ENCODE measurements at regions of chr7 and their contacts with region 1.

Region 1: GRCh38 chr7:27210441-27211083 is 10.7 kb upstream of the HOXA13 start:
- DNase-seq: peak; percentile 85
- H3K4me3 ChIP-seq: peak overlapping the region; percentile 31 to 50
- H3K27ac ChIP-seq: no peak overlapping the region
- H3K4me1 ChIP-seq: peaks cover 0 to 16% of the 10 kb centered on the region in 2 experiments; a peak in 1 of 4 replicates
- H3K27me3 ChIP-seq: peaks cover 97% of the 10 kb centered on the region
- CTCF ChIP-seq: peak; percentile 90
- EP300 ChIP-seq: no peak
- RAD21 ChIP-seq: peak; percentile 72

Region 2: GRCh38 chr7:27031289-27032172 is 179.0 kb before region 1 on chr7:
- CTCF ChIA-PET with region 1: no interaction called
- POLR2A ChIA-PET with region 1: no interaction called
- DNase-seq: no peak
- H3K4me3 ChIP-seq: no peak overlapping the region
- H3K27ac ChIP-seq: no peak overlapping the region
- H3K4me1 ChIP-seq: no peaks in the 10 kb centered on the region
- H3K27me3 ChIP-seq: peaks cover 26% of the 10 kb centered on the region; the same call in 1 of the 2 replicates
- CTCF ChIP-seq: no peak
- EP300 ChIP-seq: no peak
- RAD21 ChIP-seq: no peak

Region 3: GRCh38 chr7:27188386-27189294 is 21.9 kb before region 1 on chr7:
- CTCF ChIA-PET with region 1: interaction called, 74 read pairs
- POLR2A ChIA-PET with region 1: no interaction called
- DNase-seq: no peak
- H3K4me3 ChIP-seq: no peak overlapping the region
- H3K27ac ChIP-seq: no peak overlapping the region
- H3K4me1 ChIP-seq: peaks cover 4 to 10% of the 10 kb centered on the region in 2 experiments; a peak in 1 of 4 replicates
- H3K27me3 ChIP-seq: peaks cover 98% of the 10 kb centered on the region
- CTCF ChIP-seq: no peak
- EP300 ChIP-seq: no peak
- RAD21 ChIP-seq: no peak

Region 4: DNA sequence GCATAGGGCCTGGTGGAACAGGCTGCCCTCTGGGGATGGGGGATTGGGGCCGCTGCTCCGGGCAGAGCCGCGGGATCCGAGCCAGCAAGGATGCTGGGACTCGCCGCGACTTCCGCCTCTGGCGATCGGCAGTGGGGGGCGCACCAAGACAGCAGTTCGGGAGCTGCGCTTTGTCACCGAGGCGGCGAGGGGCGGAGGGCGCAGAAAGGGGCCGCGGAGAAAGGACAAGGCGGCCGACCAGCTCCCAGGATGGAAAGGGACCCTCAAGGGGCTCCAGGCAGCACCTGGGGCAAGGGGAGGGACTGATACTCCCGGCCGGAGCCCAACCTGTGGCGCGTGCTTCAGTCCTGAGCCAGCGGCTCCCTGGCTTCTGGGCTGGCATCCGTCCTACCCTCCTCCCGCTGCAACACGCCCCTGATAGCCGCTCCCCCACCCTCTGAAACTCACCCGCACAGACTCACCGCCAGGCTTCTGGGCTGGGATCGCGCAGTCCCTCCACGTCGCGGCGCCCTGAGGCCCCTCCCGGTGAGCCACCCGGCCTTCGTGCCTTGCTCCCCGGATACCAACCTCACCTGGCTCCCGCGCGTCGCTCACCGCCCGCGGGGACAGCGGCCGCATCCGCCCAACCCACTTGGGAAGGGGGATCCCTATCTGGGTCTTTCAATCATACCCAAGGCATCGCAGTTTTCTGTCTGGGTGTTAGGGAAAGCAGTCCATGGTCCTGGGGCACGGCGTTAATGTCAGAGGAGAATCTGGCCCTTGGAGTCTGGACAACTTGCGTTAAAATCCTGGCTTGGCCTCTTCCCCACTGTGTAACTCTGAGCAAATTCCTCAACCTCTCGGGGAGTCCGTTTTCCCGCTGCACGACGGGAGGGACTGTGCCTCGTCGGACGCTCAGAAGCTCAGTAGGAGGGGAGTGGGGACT is 25.1 kb after region 1 on chr7:
- CTCF ChIA-PET with region 1: interaction called, 10 read pairs
- POLR2A ChIA-PET with region 1: no interaction called
- DNase-seq: peak; percentile 85
- H3K4me3 ChIP-seq: peak overlapping the region; percentile 41 to 61
- H3K27ac ChIP-seq: no peak overlapping the region
- H3K4me1 ChIP-seq: peaks cover 4 to 13% of the 10 kb centered on the region in 2 experiments; a peak in 1 of 4 replicates
- H3K27me3 ChIP-seq: peaks cover 78% of the 10 kb centered on the region
- CTCF ChIP-seq: peak; percentile 44
- EP300 ChIP-seq: no peak
- RAD21 ChIP-seq: peak; percentile 63

Region 5: GRCh38 chr7:27586825-27587224 is 376.3 kb after region 1 on chr7:
- CTCF ChIA-PET with region 1: interaction called, 16 read pairs
- POLR2A ChIA-PET with region 1: no interaction called
- DNase-seq: peak; percentile 67
- H3K4me3 ChIP-seq: no peak overlapping the region
- H3K27ac ChIP-seq: no peak overlapping the region
- H3K4me1 ChIP-seq: peaks cover 0 to 17% of the 10 kb centered on the region in 2 experiments; a peak in 2 of 4 replicates
- H3K27me3 ChIP-seq: no peaks in the 10 kb centered on the region
- CTCF ChIP-seq: no peak
- EP300 ChIP-seq: no peak
- RAD21 ChIP-seq: 0 out of 2 replicates have a peak, but pooled peaks have one; percentile 3

Region 6: GRCh38 chr7:27774717-27775328 is 564.3 kb after region 1 on chr7:
- CTCF ChIA-PET with region 1: interaction called, 12 read pairs
- POLR2A ChIA-PET with region 1: no interaction called
- DNase-seq: peak; percentile 9
- H3K4me3 ChIP-seq: no peak overlapping the region
- H3K27ac ChIP-seq: no peak overlapping the region
- H3K4me1 ChIP-seq: peaks cover 0 to 4% of the 10 kb centered on the region in 2 experiments; a peak in 1 of 4 replicates
- H3K27me3 ChIP-seq: no peaks in the 10 kb centered on the region
- CTCF ChIP-seq: peak; percentile 83
- EP300 ChIP-seq: no peak
- RAD21 ChIP-seq: peak; percentile 70

Region 7: GRCh38 chr7:28096713-28097112 is 886.2 kb after region 1 on chr7:
- CTCF ChIA-PET with region 1: interaction called, 10 read pairs
- POLR2A ChIA-PET with region 1: no interaction called
- DNase-seq: peak; percentile 84
- H3K4me3 ChIP-seq: no peak overlapping the region
- H3K27ac ChIP-seq: no peak overlapping the region
- H3K4me1 ChIP-seq: no peaks in the 10 kb centered on the region
- H3K27me3 ChIP-seq: no peaks in the 10 kb centered on the region
- CTCF ChIP-seq: peak; percentile 99
- EP300 ChIP-seq: no peak
- RAD21 ChIP-seq: peak; percentile 98